Mammary epithelial cell (primary cell): ENCODE measurements at regions of chr18 and their contacts with region 1.

Region 1: GRCh38 chr18:2515908-2516625 is 55.2 kb downstream of the METTL4 start:
- DNase-seq: peak; percentile 91
- H3K4me3 ChIP-seq: no peak overlapping the region
- H3K27ac ChIP-seq: peak overlapping the region; percentile 73
- H3K4me1 ChIP-seq: peaks cover 13% of the 10 kb centered on the region
- H3K27me3 ChIP-seq: no peaks in the 10 kb centered on the region
- CTCF ChIP-seq: no peak

Region 2: GRCh38 chr18:2411381-2411960 is 104.6 kb before region 1 on chr18:
- CTCF ChIA-PET with region 1: no interaction called
- dilution Hi-C with region 1: no loop called
- in situ Hi-C with region 1: no loop called
- intact Hi-C with region 1: loop called (anchors 5 kb)
- DNase-seq: peak; percentile 76
- H3K4me3 ChIP-seq: no peak overlapping the region
- H3K27ac ChIP-seq: peak overlapping the region; percentile 80
- H3K4me1 ChIP-seq: peaks cover 31% of the 10 kb centered on the region
- H3K27me3 ChIP-seq: no peaks in the 10 kb centered on the region
- CTCF ChIP-seq: no peak

Region 3: GRCh38 chr18:2822213-2822921 is 306.3 kb after region 1 on chr18:
- CTCF ChIA-PET with region 1: no interaction called
- dilution Hi-C with region 1: no loop called
- in situ Hi-C with region 1: no loop called
- intact Hi-C with region 1: no loop called
- DNase-seq: no peak
- H3K4me3 ChIP-seq: no peak overlapping the region
- H3K27ac ChIP-seq: no peak overlapping the region
- H3K4me1 ChIP-seq: no peaks in the 10 kb centered on the region
- H3K27me3 ChIP-seq: no peaks in the 10 kb centered on the region
- CTCF ChIP-seq: no peak